Right ventricle myocardium superior (tissue), 1 donor: ENCODE measurements at regions of chr22 and their contacts with region 1.

Region 1: GRCh38 chr22:35749808-35750207 is 32.1 kb downstream of the APOL5 start:
- DNase-seq: no peak
- ATAC-seq: no peak

Region 2: DNA sequence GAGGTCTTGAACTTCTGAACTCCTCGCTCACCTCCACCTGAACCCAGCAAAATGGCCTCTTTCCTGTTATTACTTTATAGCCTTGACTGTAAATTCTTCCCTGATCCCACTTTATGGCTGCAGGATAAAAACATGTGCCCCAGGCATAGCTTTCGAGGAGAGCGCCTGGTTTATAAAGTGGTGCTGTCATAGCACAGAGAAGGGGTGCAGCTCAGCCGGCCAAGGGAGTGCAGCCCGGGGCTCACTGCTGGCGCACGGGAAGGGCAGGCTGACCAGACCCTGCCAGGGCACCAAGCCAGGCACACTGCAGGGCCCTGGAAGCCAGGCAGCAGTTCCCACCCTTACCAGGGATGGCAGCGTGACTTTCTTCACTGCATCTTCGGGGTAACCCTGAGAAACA is 633.0 kb before region 1 on chr22:
- intact Hi-C with region 1: no loop called
- DNase-seq: no peak
- ATAC-seq: no peak

Region 3: DNA sequence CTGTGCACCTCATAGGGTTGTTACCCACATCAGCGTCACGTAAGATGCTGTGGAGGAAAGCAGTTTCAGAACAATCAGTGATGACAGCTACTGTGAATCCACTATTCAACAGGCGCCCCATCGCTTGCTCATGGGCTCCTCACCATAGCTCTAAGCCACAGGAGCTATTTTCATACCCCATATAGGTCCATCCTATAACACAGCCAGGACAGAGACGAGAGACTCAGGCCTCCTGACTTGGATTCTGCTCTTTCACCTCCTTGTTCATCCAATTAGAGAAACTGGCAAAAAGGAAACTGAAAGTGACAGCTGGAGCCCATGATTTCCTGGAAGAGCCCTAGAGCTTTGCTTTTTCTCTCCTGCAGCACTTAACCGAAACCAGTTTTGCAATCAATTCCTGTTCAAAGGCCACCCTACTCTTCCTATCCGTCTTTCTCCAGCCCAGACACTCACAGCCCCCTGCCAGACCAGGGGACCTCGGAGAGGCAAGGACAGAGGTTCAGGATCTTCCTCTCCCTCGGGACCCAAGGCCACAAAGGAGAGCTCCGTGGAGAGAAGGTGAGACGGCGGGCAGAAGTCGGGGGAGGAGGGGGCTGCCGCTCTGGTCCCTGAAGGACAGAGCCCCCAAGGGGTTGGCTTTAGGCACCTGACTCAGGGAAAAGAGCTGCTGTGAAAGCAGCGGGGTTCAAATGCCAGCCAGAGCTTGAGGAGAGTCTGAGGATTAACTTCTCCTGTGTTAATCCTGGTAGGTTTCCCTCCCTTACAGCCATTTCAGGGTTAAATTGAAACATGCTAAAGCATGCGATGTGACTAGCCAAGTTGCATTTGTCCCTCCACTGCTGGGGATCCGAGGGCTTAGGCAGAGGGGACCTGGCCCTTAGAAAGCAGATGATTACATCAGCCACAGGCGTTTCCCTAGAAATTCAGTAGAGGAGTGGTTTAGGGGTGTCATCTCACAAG is 101.5 kb before region 1 on chr22 and contains the start of gene APOL6:
- intact Hi-C with region 1: loop called (anchors 10 kb)
- DNase-seq: no peak
- ATAC-seq: peak; percentile 84
- total RNA-seq, gene APOL6: 4.7 TPM

Region 4: GRCh38 chr22:35914665-35915476 is 165.1 kb after region 1 on chr22:
- intact Hi-C with region 1: loop called (anchors 5 kb)
- DNase-seq: no peak
- ATAC-seq: peak; percentile 90